ENCODE measurements at regions of chr20 and their contacts with region 1.

Region 1: GRCh38 chr20:38645980-38646858 is 44.6 kb downstream of the ARHGAP40 start:
- DNase-seq: peak in 1 of 2 donors; percentile 48
- H3K4me3 ChIP-seq: peak overlapping the region in 2 of 3 donors; percentile 30 to 47
- H3K27ac ChIP-seq: no peak overlapping the region
- H3K4me1 ChIP-seq: no peaks in the 10 kb centered on the region
- H3K27me3 ChIP-seq: peaks cover 0 to 38% of the 10 kb centered on the region in 2 donors
- CTCF ChIP-seq: peak; percentile 66 to 84 (median 72)
- POLR2A ChIP-seq: no peak

Region 2: DNA sequence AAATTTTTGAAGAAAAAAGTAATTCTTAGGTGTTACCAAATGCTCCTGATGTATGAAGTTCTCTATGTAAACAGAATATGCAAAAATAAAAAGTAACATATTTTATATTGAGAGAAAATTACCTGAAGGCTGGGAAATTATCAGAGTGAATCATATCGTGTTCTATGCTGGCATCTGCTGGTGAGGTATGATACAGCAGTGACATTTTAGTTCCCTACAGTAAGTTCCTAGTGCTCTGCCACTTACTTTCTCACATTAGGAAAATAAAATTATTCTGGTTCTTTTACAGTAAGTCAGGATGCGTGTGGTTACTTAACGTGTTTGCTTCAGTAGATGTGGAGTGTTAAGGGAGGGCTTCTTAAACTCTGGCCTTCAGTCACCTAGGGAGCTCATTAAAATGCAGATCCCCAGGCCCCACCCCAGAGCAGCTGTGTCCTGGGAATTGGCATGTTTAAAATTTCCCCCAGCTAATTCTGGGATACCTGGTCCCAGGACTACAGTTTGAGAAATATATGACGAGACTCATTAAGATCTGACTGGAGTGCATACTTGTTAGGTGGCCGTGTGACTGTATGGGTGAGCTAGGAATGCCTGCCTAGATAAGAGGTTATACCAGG is 105.2 kb after region 1 on chr20:
- intact Hi-C with region 1: loop called (anchors 10 kb)
- DNase-seq: no peak
- H3K4me3 ChIP-seq: no peak overlapping the region
- H3K27ac ChIP-seq: no peak overlapping the region
- H3K4me1 ChIP-seq: peaks cover 0 to 7% of the 10 kb centered on the region in 2 donors
- H3K27me3 ChIP-seq: no peaks in the 10 kb centered on the region
- CTCF ChIP-seq: peak in 2 of 3 donors; percentile 58 to 60
- POLR2A ChIP-seq: no peak

Measured in breast epithelium (tissue), 4 donors.